Heart right ventricle (tissue), 16 donors: ENCODE measurements at regions of chr14 and their contacts with region 1.

Region 1: GRCh38 chr14:49159081-49159480 is 427.1 kb downstream of the RPS29 start:
- DNase-seq: no peak
- ATAC-seq: no peak
- H3K4me3 ChIP-seq: no peak overlapping the region
- H3K27ac ChIP-seq: no peak overlapping the region
- H3K4me1 ChIP-seq: no peaks in the 10 kb centered on the region
- H3K27me3 ChIP-seq: no peaks in the 10 kb centered on the region
- CTCF ChIP-seq: no peak

Region 2: DNA sequence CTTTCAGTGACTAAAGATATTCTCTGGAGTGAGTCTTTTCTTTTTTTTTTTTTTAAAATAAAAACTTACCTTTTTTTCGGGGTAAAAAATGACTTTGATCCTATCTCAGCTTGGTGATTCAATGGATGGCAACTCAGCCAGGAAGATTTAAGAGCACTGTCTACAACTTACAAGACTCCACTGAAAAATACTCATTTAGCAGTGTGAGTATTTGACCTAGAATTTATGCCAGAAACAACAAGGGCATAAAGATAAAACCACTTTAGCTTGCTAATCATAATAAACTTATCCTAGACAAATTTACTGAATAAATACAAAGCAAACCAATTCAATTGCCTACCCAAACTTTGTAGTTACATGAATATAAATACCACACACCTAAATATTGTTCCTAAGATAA is 19.5 kb before region 1 on chr14:
- intact Hi-C with region 1: loop called in 1 of 10 experiments (anchors 1 kb)
- DNase-seq: no peak
- ATAC-seq: no peak
- H3K4me3 ChIP-seq: no peak overlapping the region
- H3K27ac ChIP-seq: no peak overlapping the region
- H3K4me1 ChIP-seq: no peaks in the 10 kb centered on the region
- H3K27me3 ChIP-seq: no peaks in the 10 kb centered on the region
- CTCF ChIP-seq: no peak